Activated CD8-positive, alpha-beta T cell treated with anti-CD3 and anti-CD28 coated beads for 36 hours (primary cell): ENCODE measurements at regions of chr12 and their contacts with region 1.

Region 1: DNA sequence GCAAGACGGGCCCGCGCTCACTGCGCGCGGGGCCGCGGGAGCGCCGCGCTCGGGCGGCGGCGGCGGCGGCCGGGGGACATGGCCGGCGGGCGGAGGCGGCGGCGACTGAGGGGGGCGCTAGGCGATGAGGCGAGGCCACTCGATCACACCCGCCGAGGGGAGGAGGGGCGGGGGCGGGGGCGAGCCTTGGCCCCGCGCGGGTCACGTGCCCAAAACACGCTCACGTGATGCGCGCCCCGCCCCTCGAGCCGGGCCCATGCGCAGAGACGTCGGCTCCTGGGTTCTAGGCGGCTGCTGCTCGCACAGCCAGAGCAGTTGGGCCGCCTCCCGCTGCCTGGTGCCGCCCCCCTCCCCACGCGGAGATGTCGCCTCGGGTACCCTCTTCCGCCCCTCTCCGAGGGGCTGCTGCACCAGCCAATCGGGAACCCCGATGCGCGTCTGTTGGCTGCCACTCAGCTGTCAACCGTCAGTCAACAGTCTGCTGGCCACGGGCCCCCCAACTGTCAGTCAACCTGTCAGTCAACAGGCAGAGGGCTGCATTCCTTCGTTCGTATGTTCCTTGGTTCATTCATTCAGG is at the start of gene SPPL3:
- DNase-seq: peak; percentile 94
- ATAC-seq: peak; percentile 82
- H3K4me3 Mint-ChIP-seq: peak within 1 kb of the TSS; percentile 100
- H3K27ac Mint-ChIP-seq: peak within 1 kb of the TSS; percentile 96
- H3K4me1 Mint-ChIP-seq: peaks cover 27% of the 10 kb centered on the region
- H3K27me3 Mint-ChIP-seq: no peaks in the 10 kb centered on the region
- CTCF ChIP-seq: no peak
- total RNA-seq, gene SPPL3: 19.8 to 20.8 TPM

Region 2: DNA sequence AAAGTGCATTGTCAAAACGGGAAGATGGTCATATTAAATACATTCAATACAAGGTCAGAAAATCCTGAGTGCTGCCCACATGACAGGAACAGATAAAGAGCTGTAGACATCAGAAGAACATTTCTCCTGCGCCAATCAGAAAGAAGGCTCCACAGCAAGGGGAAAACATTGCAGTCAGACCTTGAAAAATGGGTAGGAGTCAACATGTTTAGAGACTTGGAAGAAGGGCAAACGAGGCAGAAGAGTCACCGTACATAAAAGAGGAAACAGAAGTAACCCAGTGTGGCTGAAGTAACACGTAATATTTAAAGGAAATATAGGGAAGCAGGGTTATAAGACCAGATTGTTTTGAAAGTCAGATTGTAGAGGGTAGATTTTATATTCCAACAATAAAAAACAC is 12.0 kb before region 1 on chr12:
- CTCF ChIA-PET with region 1: interaction called, 14 read pairs
- POLR2A ChIA-PET with region 1: interaction called, 7 read pairs
- intact Hi-C with region 1: no loop called
- DNase-seq: peak; percentile 13
- ATAC-seq: peak; percentile 77
- H3K4me3 Mint-ChIP-seq: no peak overlapping the region
- H3K27ac Mint-ChIP-seq: peak overlapping the region; percentile 62
- H3K4me1 Mint-ChIP-seq: peaks cover 44% of the 10 kb centered on the region
- H3K27me3 Mint-ChIP-seq: no peaks in the 10 kb centered on the region
- CTCF ChIP-seq: no peak